Mammary epithelial cell (primary cell): ENCODE measurements at regions of chr14 and their contacts with region 1.

Region 1: GRCh38 chr14:97544571-97544970 is 747.4 kb downstream of the VRK1 start:
- DNase-seq: no peak
- H3K4me3 ChIP-seq: no peak overlapping the region
- H3K27ac ChIP-seq: no peak overlapping the region
- H3K4me1 ChIP-seq: no peaks in the 10 kb centered on the region
- H3K27me3 ChIP-seq: no peaks in the 10 kb centered on the region
- CTCF ChIP-seq: no peak

Region 2: GRCh38 chr14:96917442-96917963 is 627.1 kb before region 1 on chr14:
- CTCF ChIA-PET with region 1: interaction called, 13 read pairs
- dilution Hi-C with region 1: no loop called
- in situ Hi-C with region 1: no loop called
- intact Hi-C with region 1: no loop called
- DNase-seq: no peak
- H3K4me3 ChIP-seq: no peak overlapping the region
- H3K27ac ChIP-seq: no peak overlapping the region
- H3K4me1 ChIP-seq: no peaks in the 10 kb centered on the region
- H3K27me3 ChIP-seq: no peaks in the 10 kb centered on the region
- CTCF ChIP-seq: no peak

Region 3: GRCh38 chr14:96999654-97000155 is 544.9 kb before region 1 on chr14:
- CTCF ChIA-PET with region 1: no interaction called
- dilution Hi-C with region 1: no loop called
- in situ Hi-C with region 1: no loop called
- intact Hi-C with region 1: no loop called
- DNase-seq: no peak
- H3K4me3 ChIP-seq: no peak overlapping the region
- H3K27ac ChIP-seq: no peak overlapping the region
- H3K4me1 ChIP-seq: no peaks in the 10 kb centered on the region
- H3K27me3 ChIP-seq: no peaks in the 10 kb centered on the region
- CTCF ChIP-seq: no peak